ENCODE measurements at regions of chr22 and their contacts with region 1.

Region 1: GRCh38 chr22:30005213-30005857 is 74.9 kb upstream of the HORMAD2 start:
- DNase-seq: peak; percentile 63
- H3K4me3 ChIP-seq: no peak overlapping the region
- H3K27ac ChIP-seq: peak overlapping the region in 1 of 2 experiments; percentile 69; a peak in 2 of 4 replicates
- H3K4me1 ChIP-seq: peaks cover 14 to 34% of the 10 kb centered on the region in 2 experiments
- H3K27me3 ChIP-seq: no peaks in the 10 kb centered on the region
- CTCF ChIP-seq: peak; percentile 99
- EP300 ChIP-seq: no peak
- RAD21 ChIP-seq: peak; percentile 91

Region 2: DNA sequence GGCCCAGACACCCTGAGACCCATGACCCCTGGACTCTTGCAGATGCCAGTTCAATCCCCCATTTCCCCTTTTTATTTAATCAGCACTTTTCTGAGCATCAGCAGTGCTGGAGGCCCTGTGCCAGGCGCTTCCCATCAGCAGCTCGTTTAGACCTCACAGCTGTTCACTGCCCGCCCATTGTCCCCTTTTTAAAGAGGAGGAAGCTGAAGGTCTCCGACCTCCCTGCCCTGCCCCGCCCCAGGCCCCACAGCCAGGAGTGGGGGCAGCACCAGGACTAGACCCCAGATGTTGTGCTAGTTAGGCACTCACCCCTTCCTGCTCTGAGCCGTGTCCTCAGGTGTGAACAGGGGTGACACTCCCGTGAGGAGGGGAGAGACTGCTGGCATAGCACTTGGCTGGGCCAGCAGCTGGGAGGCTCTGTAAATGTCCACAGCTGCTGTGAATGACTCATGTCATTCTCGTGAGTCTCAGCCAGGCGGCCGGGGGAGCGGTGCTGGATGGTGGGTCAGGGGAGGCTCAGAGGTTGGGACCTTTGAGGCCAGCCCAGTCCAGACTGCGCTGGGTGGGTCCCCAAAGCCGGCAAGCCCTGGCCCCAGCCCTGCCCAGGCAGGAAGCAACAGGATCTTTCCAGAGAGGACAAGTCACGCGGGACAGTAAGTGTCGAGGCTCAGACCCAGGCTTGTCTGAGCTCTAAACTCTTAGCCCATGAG is 779.8 kb before region 1 on chr22:
- CTCF ChIA-PET with region 1: no interaction called
- POLR2A ChIA-PET with region 1: no interaction called
- DNase-seq: peak; percentile 32
- H3K4me3 ChIP-seq: no peak overlapping the region
- H3K27ac ChIP-seq: no peak overlapping the region
- H3K4me1 ChIP-seq: peaks cover 0 to 10% of the 10 kb centered on the region in 2 experiments; a peak in 1 of 4 replicates
- H3K27me3 ChIP-seq: no peaks in the 10 kb centered on the region
- CTCF ChIP-seq: no peak
- EP300 ChIP-seq: no peak
- RAD21 ChIP-seq: no peak

Region 3: DNA sequence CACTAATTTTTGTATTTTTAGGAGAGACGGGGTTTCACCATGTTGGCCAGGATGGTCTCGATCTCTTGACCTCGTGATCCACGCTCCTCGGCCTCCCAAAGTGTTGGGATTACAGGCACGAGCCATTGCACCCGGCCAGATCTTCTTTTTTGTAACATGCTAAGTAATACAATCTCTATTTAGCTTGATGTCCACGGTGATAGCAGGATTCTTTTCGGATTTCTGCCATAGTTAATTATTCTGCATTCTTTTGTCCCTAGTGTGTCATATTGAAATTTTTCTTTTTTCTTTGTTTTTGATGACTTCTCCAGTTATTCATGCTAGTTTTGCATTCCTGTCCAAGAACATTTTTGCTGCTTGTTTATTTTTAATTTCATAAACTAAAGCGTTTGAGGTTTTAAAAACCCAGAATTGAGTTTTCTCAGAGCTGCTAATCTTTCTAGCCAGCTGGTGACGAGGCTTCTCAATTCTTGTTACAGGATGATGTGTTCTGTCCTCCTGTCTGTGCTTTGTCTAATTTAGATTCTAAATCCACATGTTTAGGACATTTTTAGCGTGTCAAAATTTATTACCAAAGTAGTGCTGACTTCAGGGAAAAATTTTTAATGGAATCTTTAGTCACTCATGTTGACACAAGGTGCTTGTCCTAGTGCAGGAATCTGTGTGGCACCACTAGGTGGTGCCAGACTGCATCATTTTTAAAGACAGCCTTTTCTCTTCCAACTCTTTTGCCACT is 380.1 kb before region 1 on chr22:
- CTCF ChIA-PET with region 1: interaction called, 20 read pairs
- POLR2A ChIA-PET with region 1: no interaction called
- DNase-seq: peak; percentile 49
- H3K4me3 ChIP-seq: peak overlapping the region in 1 of 2 experiments; percentile 15; a peak in 1 of 4 replicates
- H3K27ac ChIP-seq: peak overlapping the region; percentile 24 to 93; a peak in 3 of 4 replicates
- H3K4me1 ChIP-seq: peaks cover 5 to 59% of the 10 kb centered on the region in 2 experiments; a peak in 3 of 4 replicates
- H3K27me3 ChIP-seq: no peaks in the 10 kb centered on the region
- CTCF ChIP-seq: peak; percentile 96
- EP300 ChIP-seq: no peak
- RAD21 ChIP-seq: peak; percentile 71

Region 4: DNA sequence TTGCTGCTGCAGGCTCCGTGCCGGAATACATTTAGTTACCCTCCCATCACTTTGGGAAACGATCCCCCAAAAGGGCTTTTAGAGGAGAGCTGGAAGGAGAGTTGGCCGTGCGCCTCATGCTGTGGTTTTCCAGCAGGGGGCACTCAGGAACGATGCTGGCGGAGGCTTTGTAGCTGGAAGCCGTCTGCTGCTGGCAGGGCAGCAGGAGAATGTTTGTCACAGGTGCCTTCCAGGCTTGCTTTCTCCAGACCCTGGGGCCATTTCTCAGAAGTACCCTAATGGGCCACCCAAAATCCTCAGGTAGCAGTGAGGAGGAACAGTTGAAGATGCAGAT is 315.5 kb before region 1 on chr22:
- CTCF ChIA-PET with region 1: interaction called, 64 read pairs
- POLR2A ChIA-PET with region 1: no interaction called
- DNase-seq: peak; percentile 79
- H3K4me3 ChIP-seq: peak overlapping the region in 1 of 2 experiments; percentile 49; a peak in 1 of 4 replicates
- H3K27ac ChIP-seq: no peak overlapping the region
- H3K4me1 ChIP-seq: peaks cover 15 to 43% of the 10 kb centered on the region in 2 experiments
- H3K27me3 ChIP-seq: no peaks in the 10 kb centered on the region
- CTCF ChIP-seq: peak; percentile 82
- EP300 ChIP-seq: no peak
- RAD21 ChIP-seq: peak; percentile 87

Region 5: GRCh38 chr22:29727131-29727523 is 278.2 kb before region 1 on chr22:
- CTCF ChIA-PET with region 1: interaction called, 14 read pairs
- POLR2A ChIA-PET with region 1: no interaction called
- DNase-seq: peak; percentile 91
- H3K4me3 ChIP-seq: no peak overlapping the region
- H3K27ac ChIP-seq: no peak overlapping the region; a peak in 1 of 4 replicates
- H3K4me1 ChIP-seq: peaks cover 0 to 27% of the 10 kb centered on the region in 2 experiments; a peak in 1 of 4 replicates
- H3K27me3 ChIP-seq: no peaks in the 10 kb centered on the region
- CTCF ChIP-seq: peak; percentile 32
- EP300 ChIP-seq: no peak
- RAD21 ChIP-seq: peak; percentile 60

Region 6: DNA sequence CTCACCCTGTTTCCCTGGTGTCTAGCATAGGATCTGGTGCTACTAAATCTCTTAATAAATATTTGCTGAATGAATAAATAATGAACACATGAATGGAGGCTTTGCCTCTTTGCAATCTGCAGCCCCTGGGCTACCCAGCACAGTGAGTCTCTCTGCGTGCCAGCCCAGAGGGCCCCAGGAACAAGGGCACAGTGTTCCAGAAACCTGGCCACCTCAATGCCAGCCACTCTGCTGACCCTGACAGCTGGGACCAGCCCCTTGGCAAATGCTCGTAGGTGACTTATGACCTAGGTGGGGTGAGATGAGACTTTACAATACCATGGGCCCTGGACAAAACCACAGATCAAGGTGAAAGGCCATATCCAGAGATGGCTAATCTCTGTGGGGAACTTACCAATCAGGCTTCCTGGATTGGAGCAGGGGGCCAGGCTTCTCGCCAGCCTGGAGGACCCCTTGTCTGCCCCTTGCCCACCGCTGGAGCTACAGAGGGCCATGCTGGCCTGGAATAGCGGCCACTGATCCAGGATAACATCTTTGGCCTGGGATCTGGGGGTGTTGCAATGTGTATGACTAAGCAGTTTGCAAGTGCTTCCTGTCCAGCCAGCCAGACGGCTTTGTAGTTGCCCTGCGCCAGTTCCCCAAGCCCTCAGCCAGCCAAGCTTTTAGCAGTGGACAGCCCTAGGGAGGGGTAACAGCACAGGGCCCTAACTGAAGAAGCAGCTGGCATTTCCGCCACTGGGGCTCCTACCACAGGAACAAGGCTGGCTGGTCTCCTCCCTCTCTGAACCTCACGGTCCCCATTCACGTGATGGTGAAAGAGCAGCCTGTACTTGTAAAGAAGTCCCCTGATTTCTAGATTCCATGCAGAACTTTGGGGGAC is 206.3 kb before region 1 on chr22:
- CTCF ChIA-PET with region 1: interaction called, 14 read pairs
- POLR2A ChIA-PET with region 1: no interaction called
- DNase-seq: peak; percentile 71
- H3K4me3 ChIP-seq: peak overlapping the region; percentile 6 to 44; a peak in 2 of 4 replicates
- H3K27ac ChIP-seq: peak overlapping the region; percentile 83 to 89
- H3K4me1 ChIP-seq: peaks cover 17 to 32% of the 10 kb centered on the region in 2 experiments
- H3K27me3 ChIP-seq: no peaks in the 10 kb centered on the region
- CTCF ChIP-seq: no peak
- EP300 ChIP-seq: peak in 1 of 2 experiments; percentile 75; a peak in 1 of 4 replicates
- RAD21 ChIP-seq: no peak; the same call in 1 of the 2 replicates

Region 7: DNA sequence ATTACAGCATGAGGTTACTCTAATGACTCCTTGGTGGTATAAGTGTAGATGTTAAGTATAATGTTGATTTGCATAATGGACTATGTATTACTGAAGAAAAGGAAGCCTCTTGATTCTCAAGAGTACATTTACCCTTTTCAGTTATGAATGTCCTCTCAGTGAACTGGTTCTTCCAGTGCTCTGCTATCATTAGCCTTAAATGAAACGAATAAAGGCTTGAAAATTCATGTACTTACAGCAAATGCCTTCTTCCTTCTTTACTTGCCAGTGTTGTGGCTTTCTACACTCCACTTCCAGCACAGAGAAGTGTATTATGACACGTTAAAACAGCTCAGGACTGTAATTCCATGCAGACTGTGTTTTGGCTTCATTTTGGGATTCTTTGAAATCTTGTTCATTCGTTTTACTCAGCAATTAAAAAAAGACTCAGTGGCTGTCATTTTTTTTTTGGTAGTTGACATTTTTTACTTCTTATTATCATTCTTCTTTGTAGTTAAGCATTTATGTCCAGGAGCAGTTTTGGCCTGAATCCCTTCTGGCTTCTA is 25.5 kb before region 1 on chr22:
- CTCF ChIA-PET with region 1: interaction called, 46 read pairs
- POLR2A ChIA-PET with region 1: no interaction called
- DNase-seq: no peak
- H3K4me3 ChIP-seq: no peak overlapping the region
- H3K27ac ChIP-seq: no peak overlapping the region
- H3K4me1 ChIP-seq: peaks cover 0 to 6% of the 10 kb centered on the region in 2 experiments; a peak in 2 of 4 replicates
- H3K27me3 ChIP-seq: no peaks in the 10 kb centered on the region
- CTCF ChIP-seq: no peak
- EP300 ChIP-seq: no peak
- RAD21 ChIP-seq: no peak

Region 8: DNA sequence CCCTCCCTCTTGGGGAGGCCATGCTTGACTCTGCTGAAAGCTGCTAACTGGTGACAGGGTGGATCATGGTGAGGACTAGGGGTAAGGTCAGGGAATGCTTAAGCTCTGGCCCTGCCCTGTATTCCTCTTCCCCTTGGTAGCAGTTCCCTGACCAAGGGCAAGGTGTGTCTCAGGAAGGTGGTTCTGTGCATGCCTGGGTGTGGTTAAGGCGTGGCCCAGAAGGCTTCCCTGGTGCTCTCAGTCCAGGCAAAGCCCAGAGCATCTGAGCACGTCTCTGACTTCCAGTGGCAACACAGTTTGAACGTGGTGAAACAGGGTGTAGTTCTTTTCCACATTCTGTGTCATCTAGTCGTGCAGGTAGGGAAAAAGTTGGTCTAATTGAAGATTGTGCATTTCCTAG is 21.8 kb after region 1 on chr22:
- CTCF ChIA-PET with region 1: interaction called, 17 read pairs
- POLR2A ChIA-PET with region 1: interaction called, 3 read pairs
- DNase-seq: no peak
- H3K4me3 ChIP-seq: no peak overlapping the region
- H3K27ac ChIP-seq: no peak overlapping the region
- H3K4me1 ChIP-seq: peaks cover 0 to 7% of the 10 kb centered on the region in 2 experiments; a peak in 1 of 4 replicates
- H3K27me3 ChIP-seq: no peaks in the 10 kb centered on the region
- CTCF ChIP-seq: no peak
- EP300 ChIP-seq: no peak
- RAD21 ChIP-seq: no peak

Region 9: GRCh38 chr22:30097861-30098260 is 92.5 kb after region 1 on chr22:
- CTCF ChIA-PET with region 1: no interaction called
- POLR2A ChIA-PET with region 1: no interaction called
- DNase-seq: no peak
- H3K4me3 ChIP-seq: no peak overlapping the region
- H3K27ac ChIP-seq: no peak overlapping the region
- H3K4me1 ChIP-seq: no peaks in the 10 kb centered on the region
- H3K27me3 ChIP-seq: no peaks in the 10 kb centered on the region
- CTCF ChIP-seq: no peak
- EP300 ChIP-seq: no peak
- RAD21 ChIP-seq: no peak

Region 10: GRCh38 chr22:30224161-30224857 is 219.0 kb after region 1 on chr22:
- CTCF ChIA-PET with region 1: no interaction called
- POLR2A ChIA-PET with region 1: no interaction called
- DNase-seq: no peak
- H3K4me3 ChIP-seq: no peak overlapping the region
- H3K27ac ChIP-seq: no peak overlapping the region
- H3K4me1 ChIP-seq: no peaks in the 10 kb centered on the region; a peak in 1 of 4 replicates
- H3K27me3 ChIP-seq: no peaks in the 10 kb centered on the region
- CTCF ChIP-seq: no peak
- EP300 ChIP-seq: no peak
- RAD21 ChIP-seq: no peak

Region 11: DNA sequence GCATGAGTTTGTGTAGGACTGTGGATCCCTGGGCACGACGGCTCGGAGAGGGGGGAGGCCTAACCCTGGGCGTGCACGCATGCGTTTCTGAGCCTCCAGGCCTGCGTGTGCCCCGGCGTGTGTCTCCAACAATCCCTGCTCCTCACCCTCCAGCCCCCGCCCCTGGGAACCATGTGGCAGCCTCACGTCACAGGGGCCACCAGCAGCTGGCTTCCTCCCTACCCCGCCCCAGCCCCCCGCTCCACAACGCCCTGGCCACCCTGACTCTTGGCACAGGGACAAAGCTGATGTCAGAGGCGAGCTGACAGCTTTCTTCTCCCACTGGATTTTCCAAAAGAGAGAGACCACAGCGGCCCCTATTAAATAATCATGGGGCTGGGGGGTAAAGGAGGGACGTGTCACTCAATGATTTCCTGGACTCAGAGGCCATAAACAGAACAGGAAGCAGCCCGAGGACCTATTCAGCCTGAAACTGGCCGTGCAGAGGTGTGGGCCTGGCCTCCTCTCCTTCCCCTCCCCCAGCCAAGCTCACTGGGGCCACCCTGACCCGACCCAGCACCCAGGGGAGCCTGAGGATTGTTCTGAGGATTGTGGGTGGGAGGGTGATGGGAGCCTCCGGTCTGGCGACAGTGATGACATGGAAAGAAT is 248.0 kb after region 1 on chr22:
- CTCF ChIA-PET with region 1: no interaction called
- POLR2A ChIA-PET with region 1: no interaction called
- DNase-seq: peak; percentile 84
- H3K4me3 ChIP-seq: no peak overlapping the region
- H3K27ac ChIP-seq: peak overlapping the region in 1 of 2 experiments; percentile 63; a peak in 2 of 4 replicates
- H3K4me1 ChIP-seq: peaks cover 29 to 40% of the 10 kb centered on the region in 2 experiments
- H3K27me3 ChIP-seq: no peaks in the 10 kb centered on the region
- CTCF ChIP-seq: no peak
- EP300 ChIP-seq: no peak
- RAD21 ChIP-seq: no peak

Measured in SK-N-SH (cell line).